Heart right ventricle (tissue), 16 donors: ENCODE measurements at regions of chr9 and their contacts with region 1.

Region 1: GRCh38 chr9:99040911-99041582 is 63.9 kb upstream of the TGFBR1 start:
- DNase-seq: no peak
- ATAC-seq: peak in 1 of 8 donors; percentile 31
- H3K4me3 ChIP-seq: no peak overlapping the region
- H3K27ac ChIP-seq: peak overlapping the region in 3 of 10 donors; percentile 43 to 53 (median 49)
- H3K4me1 ChIP-seq: peaks cover 0 to 37% (median 19%) of the 10 kb centered on the region in 9 donors
- H3K27me3 ChIP-seq: peaks cover 0 to 63% (median 0%) of the 10 kb centered on the region in 7 donors
- CTCF ChIP-seq: no peak

Region 2: DNA sequence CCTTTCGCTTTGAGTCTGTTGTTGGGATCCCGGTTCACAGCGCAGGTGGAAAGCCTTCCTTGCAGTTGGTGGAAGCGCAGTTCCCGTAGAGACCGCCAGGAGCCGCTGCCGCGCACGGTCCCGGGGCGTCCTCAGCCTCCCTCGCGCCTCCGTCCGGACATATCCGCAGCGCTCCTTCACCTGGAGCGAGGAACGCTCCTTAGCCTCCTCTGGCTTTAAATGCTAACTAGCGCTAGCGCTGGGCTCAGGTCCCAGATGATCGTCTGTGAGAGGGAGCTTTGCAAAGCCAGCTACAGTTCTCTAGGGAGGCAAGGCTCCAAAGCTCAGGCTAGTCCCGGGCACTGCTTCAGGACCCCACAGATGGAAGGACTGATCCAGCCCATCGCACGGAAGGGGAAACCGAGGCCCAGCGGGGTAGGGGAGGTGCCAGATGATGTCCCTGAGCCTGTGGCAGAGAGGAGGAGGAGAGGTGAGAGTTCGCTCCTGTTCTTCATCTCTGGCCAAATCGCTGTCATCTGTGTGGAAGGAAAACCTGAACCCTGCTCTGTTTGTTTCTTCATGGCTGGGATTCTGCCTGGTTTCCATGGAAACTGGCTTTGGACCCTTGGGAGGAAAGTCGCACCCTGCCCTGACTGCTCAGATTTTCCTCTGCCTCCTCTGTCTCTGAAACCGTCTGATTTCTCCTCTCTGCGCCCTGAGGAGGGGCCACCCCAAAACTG is 65.9 kb before region 1 on chr9:
- intact Hi-C with region 1: no loop called
- DNase-seq: peak; percentile 87 to 91
- ATAC-seq: peak; percentile 60 to 80 (median 72)
- H3K4me3 ChIP-seq: peak overlapping the region in 9 of 10 donors; percentile 2 to 44 (median 34)
- H3K27ac ChIP-seq: peak overlapping the region; percentile 20 to 92 (median 72)
- H3K4me1 ChIP-seq: peaks cover 33 to 100% (median 80%) of the 10 kb centered on the region in 9 donors
- H3K27me3 ChIP-seq: peaks cover 0 to 15% (median 0%) of the 10 kb centered on the region in 7 donors
- CTCF ChIP-seq: peak; percentile 98 to 100 (median 99)

Region 3: GRCh38 chr9:99092643-99093491 is 51.8 kb after region 1 on chr9:
- intact Hi-C with region 1: loop called in 2 of 10 experiments (anchors 10 kb)
- DNase-seq: no peak
- ATAC-seq: no peak
- H3K4me3 ChIP-seq: no peak overlapping the region
- H3K27ac ChIP-seq: no peak overlapping the region
- H3K4me1 ChIP-seq: peaks cover 0 to 10% (median 4%) of the 10 kb centered on the region in 9 donors
- H3K27me3 ChIP-seq: peaks cover 0 to 3% (median 0%) of the 10 kb centered on the region in 7 donors
- CTCF ChIP-seq: no peak

Region 4: DNA sequence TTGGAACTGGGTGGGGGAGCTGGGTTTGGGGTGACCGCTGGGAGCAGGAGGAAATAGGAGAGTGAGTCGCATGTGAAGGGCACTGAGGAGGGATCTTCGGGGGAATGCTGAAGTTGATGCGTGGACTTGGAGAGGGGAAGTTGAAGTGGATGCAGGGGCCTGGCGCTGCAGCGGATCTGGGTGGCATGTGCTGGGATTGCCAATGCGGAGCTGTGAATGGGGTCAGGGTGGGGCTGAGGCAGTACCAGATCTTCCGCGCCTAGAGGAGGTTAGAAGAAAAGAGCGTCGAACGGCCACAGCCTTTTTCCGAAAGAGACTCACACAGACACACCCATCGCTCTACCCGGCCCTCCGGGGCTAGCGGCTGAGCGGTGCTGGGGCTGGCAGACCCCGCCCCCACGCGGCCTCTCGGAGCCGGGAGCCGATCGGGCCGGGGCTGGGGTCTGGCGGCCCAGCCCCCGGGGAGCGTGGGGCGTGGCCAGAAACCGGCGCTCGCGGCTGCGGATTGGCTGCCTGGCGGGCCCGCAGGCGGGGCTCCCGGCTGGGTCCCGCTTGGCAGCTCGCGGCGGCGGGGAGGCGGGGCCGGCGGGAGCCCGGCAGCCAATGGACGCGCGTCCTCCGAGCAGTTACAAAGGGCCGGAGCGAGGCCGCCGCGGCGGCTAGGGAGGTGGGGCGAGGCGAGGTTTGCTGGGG is 63.6 kb after region 1 on chr9 and contains the start of gene TGFBR1:
- intact Hi-C with region 1: loop called in 3 of 10 experiments (anchors 5 to 10 kb)
- DNase-seq: peak; percentile 92 to 95
- ATAC-seq: peak; percentile 90 to 97 (median 94)
- H3K4me3 ChIP-seq: peak within 1 kb of the TSS; percentile 52 to 96 (median 86)
- H3K27ac ChIP-seq: peak within 1 kb of the TSS; percentile 50 to 96 (median 89)
- H3K4me1 ChIP-seq: peaks cover 6 to 55% (median 45%) of the 10 kb centered on the region in 9 donors
- H3K27me3 ChIP-seq: no peaks in the 10 kb centered on the region
- CTCF ChIP-seq: peak in 3 of 9 donors; percentile 18 to 30 (median 27)
- total RNA-seq, gene TGFBR1: 10.7 to 25.4 (median 15.0) TPM